Activated naive CD4-positive, alpha-beta T cell treated with anti-CD3 and anti-CD28 coated beads for 36 hours (primary cell): ENCODE measurements at regions of chr22 and their contacts with region 1.

Region 1: DNA sequence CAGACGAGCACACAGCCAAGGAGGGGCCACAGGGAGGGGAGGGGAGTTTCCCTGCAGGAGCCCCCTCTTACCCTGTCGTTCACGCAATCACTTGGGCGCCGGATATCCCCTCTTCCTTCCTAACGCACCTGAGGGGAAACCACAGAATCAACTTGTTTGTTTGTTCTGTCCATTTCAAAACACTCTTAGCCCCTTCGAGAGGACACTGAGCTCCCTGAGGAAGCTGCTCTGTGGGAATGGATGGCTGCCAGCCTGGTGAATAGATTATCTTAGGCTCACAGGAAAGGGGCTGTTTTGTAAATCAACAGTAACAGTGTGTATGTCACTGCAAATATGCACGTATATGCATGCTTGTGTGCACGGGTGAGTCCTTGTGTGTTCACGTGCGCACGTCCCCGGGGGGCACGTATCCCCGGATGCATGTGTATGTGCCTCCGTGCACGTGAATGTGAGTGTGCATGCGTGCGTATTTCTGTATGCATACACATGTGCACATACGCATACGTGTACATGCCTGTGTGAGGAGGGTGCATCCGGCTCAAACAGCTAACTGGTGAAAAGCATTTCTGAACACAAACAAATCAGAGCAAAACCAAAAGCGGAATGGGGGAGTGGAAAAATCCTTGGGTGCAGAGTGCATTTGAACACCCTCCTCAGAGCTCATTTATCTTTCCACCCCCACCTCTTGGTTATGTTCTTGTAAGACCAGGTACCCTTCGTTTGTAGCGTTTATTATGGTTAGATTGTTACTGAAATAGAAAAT is 7.2 kb downstream of the ARSA start:
- DNase-seq: peak; percentile 89
- H3K4me3 Mint-ChIP-seq: peak overlapping the region; percentile 72
- H3K27ac Mint-ChIP-seq: peak overlapping the region; percentile 98
- H3K4me1 Mint-ChIP-seq: peaks cover 35% of the 10 kb centered on the region
- H3K27me3 Mint-ChIP-seq: no peaks in the 10 kb centered on the region

Region 2: GRCh38 chr22:50276143-50276542 is 344.6 kb before region 1 on chr22:
- CTCF ChIA-PET with region 1: no interaction called
- intact Hi-C with region 1: loop called (anchors 2 kb)
- DNase-seq: peak; percentile 70
- H3K4me3 Mint-ChIP-seq: no peak overlapping the region
- H3K27ac Mint-ChIP-seq: no peak overlapping the region
- H3K4me1 Mint-ChIP-seq: no peaks in the 10 kb centered on the region
- H3K27me3 Mint-ChIP-seq: no peaks in the 10 kb centered on the region

Region 3: GRCh38 chr22:50314455-50315288 is 306.1 kb before region 1 on chr22:
- CTCF ChIA-PET with region 1: no interaction called
- intact Hi-C with region 1: no loop called
- DNase-seq: peak; percentile 87
- H3K4me3 Mint-ChIP-seq: peak overlapping the region; percentile 81
- H3K27ac Mint-ChIP-seq: peak overlapping the region; percentile 70
- H3K4me1 Mint-ChIP-seq: peaks cover 17% of the 10 kb centered on the region
- H3K27me3 Mint-ChIP-seq: no peaks in the 10 kb centered on the region

Region 4: DNA sequence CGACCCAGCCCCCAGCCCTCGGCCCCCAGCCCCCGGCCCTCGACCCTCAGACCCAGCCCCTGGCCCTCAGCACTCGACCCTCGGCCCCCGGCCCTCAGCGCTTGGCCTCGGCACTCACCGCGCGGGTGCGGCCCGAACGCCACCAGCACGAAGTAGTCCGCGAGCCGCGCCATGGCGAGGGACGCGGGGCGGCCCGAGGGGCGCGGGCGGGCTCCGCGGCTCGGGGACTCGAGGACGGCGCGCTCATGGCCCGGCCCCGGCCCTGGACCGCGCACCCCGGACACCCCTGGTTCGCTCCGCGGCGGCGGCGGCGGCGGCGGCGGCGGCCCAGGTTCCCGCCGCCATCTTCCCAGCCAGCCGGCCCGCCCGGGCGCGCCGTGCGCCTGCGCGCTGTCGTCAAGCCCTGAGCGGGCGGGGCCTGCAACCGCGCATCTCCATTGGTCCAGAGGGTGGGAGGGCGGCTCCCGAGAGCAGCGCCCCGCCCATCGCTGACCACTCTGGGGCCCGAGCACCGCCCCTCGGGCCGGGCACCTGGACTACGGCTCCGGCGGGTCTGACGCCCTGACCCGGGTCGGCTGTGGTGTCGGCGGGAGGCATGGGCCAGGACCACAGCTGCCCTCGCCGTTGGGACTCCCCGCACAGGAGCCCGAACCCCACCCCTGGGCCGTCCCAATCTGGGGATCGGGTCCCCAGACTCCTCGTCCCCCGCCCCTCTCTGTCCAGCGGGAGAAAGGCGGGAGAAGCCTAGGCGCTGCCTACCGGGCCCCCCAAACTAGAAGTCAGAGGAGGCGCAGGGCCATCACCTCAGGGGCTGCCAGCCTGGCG is 145.9 kb before region 1 on chr22 and contains the start of gene SBF1:
- CTCF ChIA-PET with region 1: interaction called, 5 read pairs
- intact Hi-C with region 1: loop called (anchors 1 kb)
- DNase-seq: peak; percentile 90
- H3K4me3 Mint-ChIP-seq: peak within 1 kb of the TSS; percentile 95
- H3K27ac Mint-ChIP-seq: peak within 1 kb of the TSS; percentile 87
- H3K4me1 Mint-ChIP-seq: peaks cover 46% of the 10 kb centered on the region
- H3K27me3 Mint-ChIP-seq: peaks cover 3% of the 10 kb centered on the region
- total RNA-seq, gene SBF1: 100 TPM

Region 5: DNA sequence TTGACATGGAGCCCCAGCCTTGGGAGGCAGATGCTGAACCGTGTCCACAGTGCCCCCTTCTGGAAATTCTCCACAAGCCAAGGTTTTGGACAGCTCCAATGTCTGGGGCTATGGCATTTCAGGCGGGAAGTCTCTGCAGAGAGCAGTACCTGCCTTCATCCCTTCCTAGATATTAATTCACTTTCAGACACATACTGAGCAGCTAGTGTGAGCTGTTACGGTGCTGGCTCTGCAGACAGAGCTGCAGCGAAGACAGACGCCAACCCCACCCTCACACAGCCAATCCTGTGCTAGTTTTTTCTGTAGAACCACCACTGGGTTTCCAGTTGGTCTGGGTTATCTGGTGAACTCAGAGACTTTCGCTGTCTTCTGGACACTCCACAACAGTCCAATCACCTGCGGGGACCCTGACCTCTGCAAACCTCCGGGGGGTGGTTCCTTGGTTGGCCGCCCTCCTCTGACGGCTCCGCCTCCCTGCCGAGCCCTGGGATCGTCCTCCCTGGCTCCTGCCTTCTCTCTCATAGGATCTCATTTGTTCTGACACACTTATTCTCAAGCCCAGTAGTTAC is 122.4 kb before region 1 on chr22:
- CTCF ChIA-PET with region 1: no interaction called
- intact Hi-C with region 1: no loop called
- DNase-seq: peak; percentile 86
- H3K4me3 Mint-ChIP-seq: no peak overlapping the region
- H3K27ac Mint-ChIP-seq: no peak overlapping the region
- H3K4me1 Mint-ChIP-seq: no peaks in the 10 kb centered on the region
- H3K27me3 Mint-ChIP-seq: no peaks in the 10 kb centered on the region

Region 6: GRCh38 chr22:50530877-50531545 is 89.8 kb before region 1 on chr22:
- CTCF ChIA-PET with region 1: interaction called, 25 read pairs
- intact Hi-C with region 1: loop called (anchors 1 kb)
- DNase-seq: peak; percentile 88
- H3K4me3 Mint-ChIP-seq: peak overlapping the region; percentile 92
- H3K27ac Mint-ChIP-seq: peak overlapping the region; percentile 99
- H3K4me1 Mint-ChIP-seq: peaks cover 47% of the 10 kb centered on the region
- H3K27me3 Mint-ChIP-seq: no peaks in the 10 kb centered on the region

Region 7: GRCh38 chr22:50562523-50563412 is 58.0 kb before region 1 on chr22 and contains the start of gene SYCE3:
- CTCF ChIA-PET with region 1: interaction called, 10 read pairs
- intact Hi-C with region 1: no loop called
- DNase-seq: peak; percentile 98
- H3K4me3 Mint-ChIP-seq: peak within 1 kb of the TSS; percentile 85
- H3K27ac Mint-ChIP-seq: no peak within 1 kb of the TSS
- H3K4me1 Mint-ChIP-seq: peaks cover 13% of the 10 kb centered on the region
- H3K27me3 Mint-ChIP-seq: no peaks in the 10 kb centered on the region
- total RNA-seq, gene SYCE3: 0.91 to 2.0 TPM

Region 8: DNA sequence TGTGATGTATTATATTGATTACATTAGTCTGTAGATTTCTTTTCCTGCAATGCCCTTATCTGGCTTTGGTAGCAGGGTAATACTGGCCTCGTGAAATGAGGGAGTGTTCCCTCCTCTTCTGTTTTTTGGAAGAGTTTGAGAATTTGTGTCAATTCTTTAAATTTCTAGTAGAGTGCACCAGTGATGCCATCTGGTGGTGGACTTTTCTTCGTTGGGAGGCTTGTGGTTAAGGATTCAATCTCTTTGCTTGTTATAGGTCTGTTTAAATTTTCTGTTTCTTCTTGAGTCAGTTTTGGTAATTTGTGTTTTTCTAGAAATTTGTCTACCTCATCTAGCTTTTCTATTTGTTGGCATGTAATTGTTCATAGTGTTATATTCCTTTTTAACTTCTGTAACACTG is 70.7 kb after region 1 on chr22:
- CTCF ChIA-PET with region 1: no interaction called
- intact Hi-C with region 1: loop called (anchors 2 kb)
- DNase-seq: peak; percentile 75
- H3K4me3 Mint-ChIP-seq: no peak overlapping the region
- H3K27ac Mint-ChIP-seq: no peak overlapping the region
- H3K4me1 Mint-ChIP-seq: peaks cover 4% of the 10 kb centered on the region
- H3K27me3 Mint-ChIP-seq: peaks cover 3% of the 10 kb centered on the region